ENCODE measurements at regions of chr10 and their contacts with region 1.

Region 1: GRCh38 chr10:19788075-19788686 is 28.1 kb upstream of the PLXDC2 start:
- DNase-seq: peak in 1 of 5 donors; percentile 19
- ATAC-seq: no peak
- H3K4me3 ChIP-seq: no peak overlapping the region
- H3K27ac ChIP-seq: no peak overlapping the region
- H3K4me1 ChIP-seq: no peaks in the 10 kb centered on the region
- H3K27me3 ChIP-seq: no peaks in the 10 kb centered on the region
- CTCF ChIP-seq: peak; percentile 63 to 86 (median 72)
- POLR2A ChIP-seq: no peak

Region 2: GRCh38 chr10:19412531-19412930 is 375.6 kb before region 1 on chr10:
- intact Hi-C with region 1: loop called in 1 of 10 experiments (anchors 5 kb)
- DNase-seq: no peak
- ATAC-seq: no peak
- H3K4me3 ChIP-seq: no peak overlapping the region
- H3K27ac ChIP-seq: no peak overlapping the region
- H3K4me1 ChIP-seq: no peaks in the 10 kb centered on the region
- H3K27me3 ChIP-seq: no peaks in the 10 kb centered on the region
- CTCF ChIP-seq: peak in 11 of 12 donors; percentile 11 to 47 (median 35)
- POLR2A ChIP-seq: no peak

Region 3: GRCh38 chr10:19629567-19629966 is 158.6 kb before region 1 on chr10:
- intact Hi-C with region 1: loop called in 1 of 10 experiments (anchors 10 kb)
- DNase-seq: peak; percentile 69 to 86 (median 73)
- ATAC-seq: peak; percentile 92 to 97 (median 95)
- H3K4me3 ChIP-seq: no peak overlapping the region
- H3K27ac ChIP-seq: peak overlapping the region in 8 of 12 donors; percentile 15 to 64 (median 38)
- H3K4me1 ChIP-seq: peaks cover 0 to 12% (median 0%) of the 10 kb centered on the region in 12 donors
- H3K27me3 ChIP-seq: no peaks in the 10 kb centered on the region
- CTCF ChIP-seq: peak in 6 of 12 donors; percentile 17 to 52 (median 27)
- POLR2A ChIP-seq: no peak

Region 4: DNA sequence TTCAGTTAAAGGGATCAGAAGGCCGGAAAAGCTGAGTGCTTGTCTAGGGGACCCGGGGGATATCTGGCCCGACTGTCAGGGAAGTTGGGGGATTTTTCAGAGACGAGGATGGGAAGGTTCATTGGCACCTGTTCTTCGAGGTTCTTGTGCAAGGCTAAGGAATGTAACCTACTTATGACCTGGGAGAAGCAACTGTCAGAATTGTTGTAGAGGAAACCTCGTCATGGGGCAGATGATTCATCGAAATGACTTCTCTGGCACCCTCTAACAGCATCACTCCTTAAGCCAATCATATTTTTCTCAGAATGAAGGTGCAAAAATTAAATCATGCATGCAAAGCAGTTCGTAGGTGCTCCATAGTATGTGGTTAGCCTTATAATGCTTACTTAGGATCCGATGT is 86.6 kb after region 1 on chr10:
- intact Hi-C with region 1: no loop called
- DNase-seq: no peak
- ATAC-seq: no peak
- H3K4me3 ChIP-seq: no peak overlapping the region
- H3K27ac ChIP-seq: no peak overlapping the region
- H3K4me1 ChIP-seq: peaks cover 0 to 39% (median 7%) of the 10 kb centered on the region in 12 donors
- H3K27me3 ChIP-seq: no peaks in the 10 kb centered on the region
- CTCF ChIP-seq: no peak
- POLR2A ChIP-seq: no peak